Calu3 (cell line): ENCODE measurements at regions of chrX and their contacts with region 1.

Region 1: DNA sequence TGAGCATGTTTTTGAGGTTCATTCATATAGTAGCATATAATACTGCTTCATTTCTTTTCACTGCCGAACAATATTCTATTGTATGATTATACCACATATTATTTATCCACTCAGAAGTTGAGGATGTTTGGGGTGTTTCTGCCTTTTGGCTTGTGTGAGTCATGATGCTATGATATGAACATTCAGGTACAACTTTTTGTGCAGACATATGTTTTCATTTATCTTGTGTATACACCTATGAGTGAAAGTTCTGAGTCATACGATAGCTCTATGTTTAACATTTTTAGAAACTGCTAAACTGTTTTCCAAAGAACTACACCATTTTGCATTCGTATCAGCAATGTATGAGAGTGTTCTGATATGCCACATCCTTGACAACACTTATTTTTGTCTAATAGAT is 57.7 kb downstream of the SHROOM4 start:
- DNase-seq: no peak
- H3K4me3 Mint-ChIP-seq: no peak overlapping the region
- H3K27ac Mint-ChIP-seq: no peak overlapping the region
- H3K4me1 Mint-ChIP-seq: no peaks in the 10 kb centered on the region
- H3K27me3 Mint-ChIP-seq: no peaks in the 10 kb centered on the region
- CTCF ChIP-seq: no peak

Region 2: GRCh38 chrX:50787099-50787498 is 30.8 kb after region 1 on chrX:
- CTCF ChIA-PET with region 1: no interaction called
- intact Hi-C with region 1: loop called (anchors 1 kb)
- DNase-seq: no peak
- H3K4me3 Mint-ChIP-seq: no peak overlapping the region
- H3K27ac Mint-ChIP-seq: no peak overlapping the region
- H3K4me1 Mint-ChIP-seq: no peaks in the 10 kb centered on the region
- H3K27me3 Mint-ChIP-seq: no peaks in the 10 kb centered on the region
- CTCF ChIP-seq: no peak

Region 3: GRCh38 chrX:50827991-50828390 is 71.7 kb after region 1 on chrX:
- CTCF ChIA-PET with region 1: no interaction called
- intact Hi-C with region 1: no loop called
- DNase-seq: peak; percentile 41
- H3K4me3 Mint-ChIP-seq: no peak overlapping the region
- H3K27ac Mint-ChIP-seq: peak overlapping the region; percentile 77
- H3K4me1 Mint-ChIP-seq: peaks cover 25% of the 10 kb centered on the region
- H3K27me3 Mint-ChIP-seq: no peaks in the 10 kb centered on the region
- CTCF ChIP-seq: no peak